Colonic mucosa (tissue), 4 donors: ENCODE measurements at regions of chr20 and their contacts with region 1.

Region 1: DNA sequence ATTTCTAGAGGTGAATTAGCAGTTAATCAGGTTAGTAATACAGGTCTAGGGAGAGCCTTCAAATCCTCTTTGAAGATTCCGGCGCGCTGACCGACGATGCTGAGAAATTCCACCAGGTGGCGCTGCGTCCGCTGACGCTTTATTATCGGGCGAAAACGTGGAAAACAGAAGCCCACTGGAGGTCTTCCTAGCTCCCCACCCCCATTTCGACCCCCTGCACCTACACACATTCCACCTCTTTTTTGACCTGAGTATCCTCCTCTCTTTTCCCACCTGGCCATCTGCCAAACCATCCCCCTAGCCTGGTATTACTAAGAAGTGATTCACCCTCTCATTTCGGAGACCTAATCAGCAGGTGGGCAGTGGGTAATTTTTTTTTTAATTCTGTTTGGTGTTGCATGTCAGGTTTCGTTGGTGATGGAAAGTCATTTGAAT is 65.4 kb upstream of the RIN2 start:
- DNase-seq: peak; percentile 73
- H3K4me3 ChIP-seq: no peak overlapping the region
- H3K27ac ChIP-seq: no peak overlapping the region
- H3K4me1 ChIP-seq: no peaks in the 10 kb centered on the region
- H3K27me3 ChIP-seq: no peaks in the 10 kb centered on the region
- CTCF ChIP-seq: peak; percentile 94

Region 2: GRCh38 chr20:19784511-19785172 is 91.9 kb after region 1 on chr20:
- intact Hi-C with region 1: loop called (anchors 5 kb)
- DNase-seq: peak; percentile 73
- H3K4me3 ChIP-seq: no peak overlapping the region
- H3K27ac ChIP-seq: peak overlapping the region; percentile 44
- H3K4me1 ChIP-seq: no peaks in the 10 kb centered on the region
- H3K27me3 ChIP-seq: no peaks in the 10 kb centered on the region
- CTCF ChIP-seq: peak; percentile 59

Region 3: DNA sequence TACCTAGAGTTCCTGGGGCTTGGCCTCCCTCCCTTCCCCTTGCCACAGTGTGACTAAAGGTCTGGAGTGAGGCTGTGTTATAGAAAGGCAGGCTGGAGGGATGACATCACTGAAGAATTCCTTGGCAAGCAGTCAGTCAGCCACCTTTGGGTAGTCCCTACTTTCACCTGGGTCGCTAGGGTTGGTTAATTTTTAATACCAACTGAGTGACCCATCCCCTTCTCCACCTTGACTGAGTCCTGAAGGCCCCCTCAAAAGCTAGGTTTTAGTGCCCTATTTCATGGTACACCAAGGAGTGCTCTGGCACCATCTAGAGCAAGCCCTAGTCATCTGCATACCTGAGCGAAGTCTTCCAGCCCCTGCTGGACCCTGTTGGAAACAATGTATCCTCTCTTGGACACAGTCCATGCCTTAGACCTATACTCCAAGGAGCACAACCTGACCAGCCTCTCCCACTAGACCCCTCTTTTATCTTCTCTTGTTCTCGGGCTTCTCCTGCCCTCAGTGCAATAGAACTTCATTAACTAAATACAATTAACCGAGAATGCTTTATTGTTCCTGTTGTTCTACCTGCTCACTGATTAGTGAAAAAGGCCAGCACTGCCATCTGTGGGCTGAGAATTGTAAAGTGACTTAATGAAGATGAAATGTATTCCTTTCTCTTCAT is 109.9 kb after region 1 on chr20:
- intact Hi-C with region 1: loop called (anchors 5 kb)
- DNase-seq: peak; percentile 42
- H3K4me3 ChIP-seq: no peak overlapping the region
- H3K27ac ChIP-seq: no peak overlapping the region
- H3K4me1 ChIP-seq: no peaks in the 10 kb centered on the region
- H3K27me3 ChIP-seq: no peaks in the 10 kb centered on the region
- CTCF ChIP-seq: peak; percentile 36

Region 4: GRCh38 chr20:19995220-19995863 is 302.6 kb after region 1 on chr20:
- intact Hi-C with region 1: loop called (anchors 10 kb)
- DNase-seq: no peak
- H3K4me3 ChIP-seq: no peak overlapping the region
- H3K27ac ChIP-seq: no peak overlapping the region
- H3K4me1 ChIP-seq: peaks cover 4% of the 10 kb centered on the region
- H3K27me3 ChIP-seq: no peaks in the 10 kb centered on the region
- CTCF ChIP-seq: peak; percentile 56